Cardiac septum (tissue), 1 donor: ENCODE measurements at regions of chr1 and their contacts with region 1.

Region 1: DNA sequence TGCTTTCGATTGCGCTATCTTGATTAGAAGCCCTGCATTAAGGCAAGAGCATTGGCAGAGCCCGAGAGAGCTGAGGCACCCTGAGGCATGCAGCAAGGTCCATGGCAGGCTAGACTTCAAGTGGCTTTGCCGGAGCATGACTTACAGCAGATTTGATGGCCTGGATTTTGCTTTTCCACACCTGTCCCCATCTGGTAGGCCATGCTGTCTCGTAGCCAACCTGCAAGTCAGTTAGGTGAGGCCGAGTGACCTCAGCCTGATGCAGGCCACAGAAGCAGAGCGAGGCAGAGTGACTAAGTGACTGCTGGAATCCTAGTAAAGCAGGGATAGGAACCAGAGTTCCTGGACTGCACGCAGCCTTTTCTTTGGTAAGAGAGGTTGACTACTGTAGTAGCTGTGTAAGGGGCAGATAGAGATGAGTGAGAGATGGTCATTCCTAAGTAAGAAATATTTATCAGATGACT is 148.9 kb downstream of the PBX1 start:
- DNase-seq: no peak

Region 2: DNA sequence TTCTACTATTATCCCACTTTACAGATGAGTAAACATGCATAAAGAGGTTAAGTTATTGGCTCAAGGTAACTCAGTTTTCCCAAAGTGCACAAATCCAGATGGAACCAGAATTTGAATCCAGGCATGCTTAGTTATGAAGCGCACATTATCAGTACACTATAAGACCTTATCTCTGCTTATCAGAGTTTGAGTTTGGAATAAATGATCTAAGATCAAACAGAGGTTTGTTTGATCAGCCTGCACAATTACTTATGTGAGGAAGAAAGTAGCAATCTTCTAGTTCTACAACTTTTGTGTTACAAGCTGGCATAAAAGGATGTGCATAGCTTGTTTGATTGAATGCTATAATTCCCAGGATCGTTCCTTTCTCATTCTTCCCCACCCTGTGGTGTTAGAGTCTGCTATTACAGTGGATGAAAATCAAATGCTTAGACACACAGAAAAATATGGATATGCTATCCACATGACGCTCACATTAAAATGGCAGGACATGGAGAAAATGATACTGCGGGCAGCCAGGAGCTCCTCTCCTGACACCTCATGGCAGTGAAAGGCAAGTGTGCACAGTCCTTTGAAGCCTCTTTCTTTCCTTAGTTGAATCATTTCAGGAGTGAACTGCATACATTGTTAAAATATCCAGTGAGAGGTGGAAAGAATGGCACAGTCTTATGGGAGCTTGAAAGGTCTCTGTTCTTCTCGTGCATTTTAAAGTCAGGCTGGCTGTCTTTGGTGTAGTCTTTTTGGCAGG is 172.9 kb before region 1 on chr1:
- intact Hi-C with region 1: no loop called
- DNase-seq: no peak

Region 3: GRCh38 chr1:164558461-164559341 is 149.2 kb before region 1 on chr1 and contains the start of gene PBX1:
- intact Hi-C with region 1: loop called (anchors 10 kb)
- DNase-seq: peak; percentile 97
- total RNA-seq, gene PBX1: 52.2 TPM

Region 4: GRCh38 chr1:164588516-164589341 is 119.2 kb before region 1 on chr1:
- intact Hi-C with region 1: no loop called
- DNase-seq: no peak

Region 5: DNA sequence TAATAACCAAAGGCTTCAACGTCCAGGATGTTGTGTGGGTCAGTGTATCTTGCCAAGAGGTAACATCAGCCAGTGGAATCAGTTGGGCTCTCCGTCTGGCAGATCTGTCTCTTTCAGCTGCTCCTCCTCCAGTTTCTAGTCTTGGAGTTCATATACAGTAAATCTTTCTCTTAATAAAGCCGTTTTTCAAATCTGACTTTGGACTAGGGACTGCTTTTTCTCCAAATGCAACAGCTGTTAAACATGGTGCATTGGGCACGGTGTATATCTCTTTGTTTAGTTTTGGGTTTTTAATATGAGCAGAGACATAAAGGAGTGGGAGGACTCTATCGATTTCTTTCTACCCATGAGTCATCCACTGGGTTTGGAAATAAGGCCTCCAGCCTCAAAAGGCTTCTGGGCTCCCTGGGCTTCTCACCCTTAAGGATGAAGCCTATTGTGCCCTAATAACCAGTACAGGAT is 63.1 kb before region 1 on chr1:
- intact Hi-C with region 1: loop called (anchors 5 kb)
- DNase-seq: no peak

Region 6: DNA sequence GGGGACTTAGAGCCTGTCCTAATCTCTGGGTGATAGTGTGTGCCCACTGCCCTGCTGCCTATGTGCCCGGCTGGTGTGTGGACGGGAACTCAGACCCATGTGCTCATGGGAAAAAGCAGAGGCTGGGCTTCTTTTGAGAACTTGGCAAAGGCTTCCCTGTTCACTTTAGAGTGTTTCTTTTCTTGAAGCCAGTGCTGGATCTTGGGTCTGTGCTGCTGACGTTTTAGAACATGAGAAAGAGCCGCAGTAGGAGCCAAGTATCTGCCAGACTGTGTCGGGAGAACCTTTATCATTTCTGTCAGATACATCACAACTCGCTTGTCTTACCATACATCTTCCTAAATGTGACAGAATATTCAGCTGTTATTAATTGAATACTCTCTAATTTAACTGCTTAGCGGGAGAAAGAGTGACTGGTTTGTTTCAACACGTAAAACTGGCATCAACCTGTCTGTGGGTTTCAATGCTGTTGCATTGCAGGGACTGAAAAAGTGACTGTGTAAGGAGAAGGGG is 46.2 kb after region 1 on chr1:
- intact Hi-C with region 1: loop called (anchors 5 kb)
- DNase-seq: no peak

Region 7: DNA sequence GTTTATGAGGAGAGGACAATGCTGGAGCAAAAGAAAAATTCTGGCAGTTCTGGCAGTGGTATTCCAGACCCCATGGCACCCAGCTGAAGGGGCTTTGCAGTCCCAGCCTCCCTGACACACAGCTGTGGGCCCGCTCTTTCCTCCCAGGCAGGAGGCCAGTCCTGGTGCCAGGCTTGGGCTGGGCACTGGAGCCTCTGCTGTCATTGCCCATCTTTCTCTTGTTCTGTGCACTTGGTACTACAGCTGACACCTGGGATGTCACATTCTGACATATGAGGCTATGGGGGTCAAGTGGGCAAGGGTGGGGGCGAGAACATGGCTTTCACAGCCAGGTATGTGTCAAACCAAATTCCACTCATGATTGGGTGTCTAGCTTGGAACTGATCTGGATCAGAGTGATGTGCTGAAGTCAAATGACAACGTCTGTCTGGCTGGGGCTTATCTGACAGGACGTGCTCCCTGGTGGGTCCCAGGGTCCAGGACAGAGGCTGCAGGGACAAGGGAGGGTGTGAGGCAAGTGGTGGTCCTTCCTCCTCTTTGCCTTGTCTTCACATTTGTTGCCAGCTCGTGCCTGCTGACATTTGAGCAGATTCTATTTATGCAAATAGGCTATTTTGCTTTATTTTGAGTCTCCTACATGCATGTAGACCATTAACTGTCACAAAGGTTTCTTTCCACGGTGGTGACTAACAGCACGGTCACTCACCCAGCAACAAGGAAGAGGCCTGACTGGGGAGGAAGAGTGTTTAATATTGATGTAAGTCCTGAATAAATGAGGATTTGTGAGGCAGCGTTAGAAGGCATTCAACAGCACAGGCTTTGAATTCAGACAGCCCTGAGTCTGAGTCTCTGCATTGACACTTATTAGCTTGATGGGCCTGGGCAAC is 187.4 kb after region 1 on chr1:
- intact Hi-C with region 1: no loop called
- DNase-seq: no peak